PC-9 (cell line): ENCODE measurements at regions of chr3 and their contacts with region 1.

Region 1: DNA sequence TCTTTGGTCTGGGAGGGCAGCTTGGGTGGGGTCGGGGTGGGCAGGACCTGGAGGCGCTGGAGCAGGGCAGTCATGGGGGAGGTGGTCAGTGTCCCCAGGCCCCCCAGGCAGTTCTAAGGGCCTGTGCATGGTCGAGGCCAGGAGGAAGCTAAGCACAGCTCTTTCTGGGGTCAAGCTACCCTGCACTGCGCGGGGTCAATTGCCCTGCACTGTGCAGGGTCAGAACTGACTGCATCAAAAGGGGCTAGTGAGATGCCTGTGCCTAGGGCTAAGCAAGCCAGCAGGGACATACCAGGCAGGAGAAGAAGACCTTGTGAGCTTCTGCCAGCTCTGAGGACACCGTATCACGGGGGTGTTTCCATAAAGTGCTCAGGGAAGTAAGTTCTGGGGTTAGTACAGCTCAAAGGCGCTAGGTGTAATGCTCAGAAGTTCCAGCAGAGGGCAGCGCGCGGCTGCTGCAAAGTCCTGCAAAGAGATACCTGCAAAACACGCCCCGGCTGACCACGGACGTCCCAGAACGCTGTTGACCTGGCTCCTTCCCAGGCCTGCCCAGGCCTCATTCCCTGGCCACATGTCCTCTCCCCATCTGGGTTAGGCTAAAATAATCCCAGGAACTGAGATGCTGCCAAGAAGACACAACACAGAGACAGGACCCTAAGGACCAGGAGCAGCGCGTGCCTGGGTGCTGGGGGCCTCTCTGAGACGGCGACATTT is 18.8 kb upstream of the IQSEC1 start:
- DNase-seq: peak; percentile 69 to 87
- H3K4me3 ChIP-seq: no peak overlapping the region
- H3K27ac ChIP-seq: no peak overlapping the region
- H3K4me1 ChIP-seq: peaks cover 18% of the 10 kb centered on the region
- H3K27me3 ChIP-seq: no peaks in the 10 kb centered on the region
- CTCF ChIP-seq: peak; percentile 98

Region 2: GRCh38 chr3:12027184-12027846 is 1064.7 kb before region 1 on chr3:
- CTCF ChIA-PET with region 1: no interaction called
- POLR2A ChIA-PET with region 1: no interaction called
- intact Hi-C with region 1: no loop called
- DNase-seq: no peak
- H3K4me3 ChIP-seq: no peak overlapping the region
- H3K27ac ChIP-seq: no peak overlapping the region
- H3K4me1 ChIP-seq: no peaks in the 10 kb centered on the region
- H3K27me3 ChIP-seq: peaks cover 50% of the 10 kb centered on the region
- CTCF ChIP-seq: no peak

Region 3: GRCh38 chr3:12853191-12853741 is 238.8 kb before region 1 on chr3:
- CTCF ChIA-PET with region 1: no interaction called
- POLR2A ChIA-PET with region 1: no interaction called
- intact Hi-C with region 1: no loop called
- DNase-seq: peak; percentile 55 to 88
- H3K4me3 ChIP-seq: no peak overlapping the region
- H3K27ac ChIP-seq: no peak overlapping the region
- H3K4me1 ChIP-seq: peaks cover 22% of the 10 kb centered on the region
- H3K27me3 ChIP-seq: no peaks in the 10 kb centered on the region; the same call in 1 of the 2 replicates
- CTCF ChIP-seq: no peak

Region 4: DNA sequence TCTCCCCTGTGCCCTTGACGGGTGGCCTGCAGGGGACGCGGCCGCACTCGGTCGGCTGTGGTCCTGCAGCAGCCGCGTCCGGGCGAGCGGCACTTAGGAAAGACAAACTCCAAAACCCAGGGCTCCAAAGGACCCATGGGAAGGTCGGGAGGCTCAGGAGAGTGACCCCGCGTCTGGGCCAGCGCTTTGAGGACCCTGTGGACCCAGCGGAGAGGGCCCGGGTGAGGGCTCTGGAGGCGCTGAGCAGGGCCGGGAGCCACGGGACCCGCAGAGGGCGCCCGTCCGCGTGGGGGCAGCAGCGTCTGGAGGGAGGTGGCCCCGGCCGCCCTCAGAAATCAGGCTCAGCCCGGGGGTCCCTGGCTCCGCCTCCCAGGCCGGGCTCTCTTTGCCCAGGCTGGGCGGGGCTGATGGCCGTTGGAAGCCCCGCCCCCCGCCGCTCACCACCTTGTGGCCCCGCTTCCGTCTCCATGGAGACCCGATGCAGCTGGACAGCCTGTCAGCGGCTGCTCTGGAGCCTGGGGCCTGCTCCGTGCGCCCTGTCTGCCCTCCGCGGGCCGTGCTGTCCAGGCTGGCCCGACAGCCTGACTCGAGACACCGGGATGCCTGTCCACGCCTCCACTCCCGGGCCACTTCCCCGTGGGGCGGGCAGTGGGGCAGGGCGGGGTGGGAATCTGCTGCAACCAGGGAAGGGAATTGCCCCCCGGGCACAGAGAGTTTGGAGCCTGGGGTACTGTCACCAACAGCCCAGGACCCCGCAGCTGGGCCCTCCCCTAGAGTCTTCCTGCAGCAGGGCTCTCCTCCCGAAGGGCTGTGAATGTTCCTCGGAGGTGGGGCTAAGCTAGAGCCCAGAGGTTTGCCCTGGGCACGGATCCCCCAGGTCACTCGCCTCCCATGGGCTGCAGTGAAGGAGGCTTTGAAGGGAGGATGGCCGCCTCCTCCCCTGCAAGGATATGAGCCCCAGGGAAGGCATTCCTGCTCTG is 215.9 kb before region 1 on chr3:
- CTCF ChIA-PET with region 1: no interaction called
- POLR2A ChIA-PET with region 1: no interaction called
- intact Hi-C with region 1: loop called (anchors 10 kb)
- DNase-seq: peak in 1 of 2 experiments; percentile 31
- H3K4me3 ChIP-seq: no peak overlapping the region
- H3K27ac ChIP-seq: no peak overlapping the region
- H3K4me1 ChIP-seq: no peaks in the 10 kb centered on the region
- H3K27me3 ChIP-seq: peaks cover 33% of the 10 kb centered on the region
- CTCF ChIP-seq: no peak

Region 5: GRCh38 chr3:12984023-12984823 is 107.8 kb before region 1 on chr3:
- CTCF ChIA-PET with region 1: no interaction called
- POLR2A ChIA-PET with region 1: no interaction called
- intact Hi-C with region 1: no loop called
- DNase-seq: peak; percentile 42 to 55
- H3K4me3 ChIP-seq: no peak overlapping the region
- H3K27ac ChIP-seq: no peak overlapping the region
- H3K4me1 ChIP-seq: peaks cover 9% of the 10 kb centered on the region
- H3K27me3 ChIP-seq: no peaks in the 10 kb centered on the region
- CTCF ChIP-seq: peak; percentile 78

Region 6: DNA sequence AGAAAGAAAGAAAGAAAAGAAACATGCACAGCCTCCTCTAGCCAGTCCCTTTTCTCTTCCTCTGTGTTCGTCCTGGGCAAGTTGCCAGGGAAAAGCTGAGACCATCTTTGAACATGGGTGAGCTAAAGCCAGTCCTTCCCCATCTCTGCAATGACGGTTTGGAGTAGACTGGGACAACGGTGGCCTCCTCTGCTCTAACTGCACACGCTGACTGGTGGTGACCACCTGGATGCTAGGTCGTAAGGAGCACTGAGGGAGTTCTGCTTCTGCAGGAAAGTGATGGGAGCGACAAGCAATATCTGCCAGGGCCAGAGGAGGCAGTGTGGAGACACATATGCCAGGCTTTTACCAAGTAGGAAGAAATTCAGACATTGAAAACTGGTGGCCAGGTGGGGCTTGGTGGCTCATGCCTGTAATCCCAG is 216.3 kb after region 1 on chr3:
- CTCF ChIA-PET with region 1: interaction called, 15 read pairs
- POLR2A ChIA-PET with region 1: interaction called, 4 read pairs
- intact Hi-C with region 1: no loop called
- DNase-seq: peak; percentile 7 to 37
- H3K4me3 ChIP-seq: no peak overlapping the region
- H3K27ac ChIP-seq: no peak overlapping the region
- H3K4me1 ChIP-seq: no peaks in the 10 kb centered on the region
- H3K27me3 ChIP-seq: no peaks in the 10 kb centered on the region
- CTCF ChIP-seq: peak; percentile 71

Region 7: GRCh38 chr3:13648060-13649001 is 556.3 kb after region 1 on chr3:
- CTCF ChIA-PET with region 1: no interaction called
- POLR2A ChIA-PET with region 1: no interaction called
- intact Hi-C with region 1: loop called (anchors 1 kb)
- DNase-seq: peak; percentile 54 to 85
- H3K4me3 ChIP-seq: no peak overlapping the region
- H3K27ac ChIP-seq: no peak overlapping the region
- H3K4me1 ChIP-seq: peaks cover 47% of the 10 kb centered on the region
- H3K27me3 ChIP-seq: no peaks in the 10 kb centered on the region
- CTCF ChIP-seq: peak; percentile 99